Activated T-helper 1 cell treated with anti-CD3 and anti-CD28 coated beads, Interleukin-12 subunit alpha, Interleukin-12 subunit beta, Interleukin-2, Interleukin-4 antibody, amounts not matched to agents 30 ng/mL and 10 ng/mL and 1 ng/mL, durations not matched to agents 14 hours and 24 hours and 36 hours (primary cell): ENCODE measurements at regions of chr10 and their contacts with region 1.

Region 1: DNA sequence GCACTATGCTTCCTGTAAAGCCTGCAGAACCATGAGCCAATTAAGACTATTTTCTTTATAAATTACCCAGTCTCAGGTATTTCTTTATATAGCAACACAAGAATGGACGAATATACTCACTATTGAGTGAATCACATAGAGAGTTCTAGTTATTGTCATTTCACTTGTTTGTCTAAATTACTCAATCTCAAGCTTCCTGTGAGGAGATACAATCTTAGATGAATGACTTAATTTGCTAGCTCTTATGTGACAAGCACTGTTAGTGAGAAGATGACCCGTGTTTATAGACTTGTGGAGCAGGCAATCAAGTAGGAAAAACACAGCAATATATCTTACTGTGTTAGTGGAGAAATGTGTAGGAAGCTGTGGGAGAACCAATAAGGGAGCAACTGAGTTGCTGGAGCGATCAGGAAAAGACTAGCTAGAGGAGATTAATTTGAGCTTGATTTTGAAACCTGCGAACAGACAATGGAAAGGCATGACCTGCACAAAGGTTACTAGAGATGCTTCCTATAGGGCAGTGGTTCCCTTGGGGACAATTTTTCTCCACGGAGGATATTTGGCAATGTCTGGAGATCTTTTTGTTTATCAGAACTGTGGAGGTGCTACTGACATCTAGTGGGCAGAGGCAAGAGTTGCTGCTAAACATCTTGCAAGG is 481.1 kb downstream of the SH2D4B start:
- DNase-seq: no peak
- H3K4me3 Mint-ChIP-seq: no peak overlapping the region
- H3K27ac Mint-ChIP-seq: no peak overlapping the region
- H3K4me1 Mint-ChIP-seq: no peaks in the 10 kb centered on the region
- H3K27me3 Mint-ChIP-seq: peaks cover 2% of the 10 kb centered on the region

Region 2: DNA sequence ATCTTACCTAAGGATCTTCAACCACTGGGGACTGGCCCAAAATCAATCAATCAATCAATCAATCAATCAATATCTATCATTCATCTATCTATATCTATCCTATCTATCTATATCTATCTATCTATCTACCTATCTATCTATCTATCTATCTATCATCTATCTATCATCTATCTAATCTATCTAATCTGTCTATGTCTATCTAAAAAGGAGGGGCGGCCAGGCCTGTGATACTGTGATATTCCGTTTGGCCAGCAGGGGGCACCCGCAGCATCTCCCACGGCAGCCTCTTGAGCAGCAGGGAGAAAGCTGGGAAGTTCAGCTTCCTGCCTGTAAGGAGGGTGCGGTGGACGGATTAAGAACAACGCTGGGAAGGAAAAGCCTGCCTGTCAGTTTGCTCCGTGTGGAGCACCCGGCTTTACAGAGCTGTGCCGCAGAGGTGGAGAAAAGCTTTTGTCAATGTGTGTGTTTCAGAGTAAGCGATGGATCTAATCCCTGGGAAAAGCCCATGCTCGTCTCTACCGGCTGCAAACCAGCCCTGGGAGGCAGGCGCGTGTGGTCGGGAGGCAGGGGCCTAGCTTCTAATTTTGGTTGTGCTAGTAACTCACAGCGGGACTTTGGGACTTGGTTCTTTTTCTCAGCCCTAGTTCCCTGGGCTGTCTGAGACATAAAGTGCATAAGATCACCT is 356.1 kb before region 1 on chr10:
- intact Hi-C with region 1: loop called (anchors 10 kb)
- DNase-seq: peak; percentile 26
- H3K4me3 Mint-ChIP-seq: no peak overlapping the region
- H3K27ac Mint-ChIP-seq: no peak overlapping the region
- H3K4me1 Mint-ChIP-seq: peaks cover 6% of the 10 kb centered on the region
- H3K27me3 Mint-ChIP-seq: peaks cover 7% of the 10 kb centered on the region

Region 3: DNA sequence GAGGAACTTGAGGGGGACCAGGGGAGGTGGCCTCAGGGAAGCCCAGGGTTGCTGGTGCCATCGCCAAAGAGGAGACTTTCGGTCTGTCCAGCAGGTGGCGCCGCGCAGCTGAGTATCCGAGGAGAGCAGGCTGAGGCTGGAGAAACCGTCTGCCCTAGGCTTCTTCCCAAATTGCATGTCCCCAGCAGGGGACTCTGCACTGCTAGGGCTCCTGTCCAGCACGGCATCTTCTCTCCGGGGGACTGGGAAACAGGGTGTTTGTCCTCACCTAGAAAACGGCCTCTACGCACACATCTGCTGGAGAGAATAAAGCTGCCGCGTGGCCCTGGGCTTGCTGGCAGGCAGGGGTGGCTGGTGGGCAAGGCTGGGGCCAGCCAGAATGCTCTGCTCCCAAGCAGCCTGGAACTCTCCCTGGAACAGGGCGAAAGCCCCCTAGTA is 319.2 kb before region 1 on chr10:
- intact Hi-C with region 1: loop called (anchors 1 kb)
- DNase-seq: peak; percentile 44
- H3K4me3 Mint-ChIP-seq: no peak overlapping the region
- H3K27ac Mint-ChIP-seq: no peak overlapping the region
- H3K4me1 Mint-ChIP-seq: no peaks in the 10 kb centered on the region
- H3K27me3 Mint-ChIP-seq: no peaks in the 10 kb centered on the region